WTC11 (cell line): ENCODE measurements at regions of chr16 and their contacts with region 1.

Region 1: GRCh38 chr16:81666113-81666512 is 113.0 kb upstream of the PLCG2 start:
- DNase-seq: no peak
- ATAC-seq: no peak
- H3K4me3 Mint-ChIP-seq: no peak overlapping the region
- H3K27ac Mint-ChIP-seq: no peak overlapping the region
- H3K4me1 Mint-ChIP-seq: no peaks in the 10 kb centered on the region
- H3K27me3 Mint-ChIP-seq: no peaks in the 10 kb centered on the region
- CTCF ChIP-seq: no peak

Region 2: GRCh38 chr16:81473558-81473957 is 192.6 kb before region 1 on chr16:
- CTCF ChIA-PET with region 1: no interaction called
- POLR2A ChIA-PET with region 1: interaction called, 11 read pairs
- DNase-seq: no peak
- ATAC-seq: no peak
- H3K4me3 Mint-ChIP-seq: no peak overlapping the region
- H3K27ac Mint-ChIP-seq: peak overlapping the region; percentile 24
- H3K4me1 Mint-ChIP-seq: peaks cover 43% of the 10 kb centered on the region
- H3K27me3 Mint-ChIP-seq: no peaks in the 10 kb centered on the region
- CTCF ChIP-seq: no peak

Region 3: GRCh38 chr16:81680444-81681275 is 14.5 kb after region 1 on chr16:
- CTCF ChIA-PET with region 1: no interaction called
- POLR2A ChIA-PET with region 1: no interaction called
- DNase-seq: no peak
- ATAC-seq: no peak
- H3K4me3 Mint-ChIP-seq: no peak overlapping the region
- H3K27ac Mint-ChIP-seq: peak overlapping the region; percentile 88
- H3K4me1 Mint-ChIP-seq: peaks cover 10% of the 10 kb centered on the region
- H3K27me3 Mint-ChIP-seq: no peaks in the 10 kb centered on the region
- CTCF ChIP-seq: no peak